ENCODE measurements at regions of chr2 and their contacts with region 1.

Region 1: DNA sequence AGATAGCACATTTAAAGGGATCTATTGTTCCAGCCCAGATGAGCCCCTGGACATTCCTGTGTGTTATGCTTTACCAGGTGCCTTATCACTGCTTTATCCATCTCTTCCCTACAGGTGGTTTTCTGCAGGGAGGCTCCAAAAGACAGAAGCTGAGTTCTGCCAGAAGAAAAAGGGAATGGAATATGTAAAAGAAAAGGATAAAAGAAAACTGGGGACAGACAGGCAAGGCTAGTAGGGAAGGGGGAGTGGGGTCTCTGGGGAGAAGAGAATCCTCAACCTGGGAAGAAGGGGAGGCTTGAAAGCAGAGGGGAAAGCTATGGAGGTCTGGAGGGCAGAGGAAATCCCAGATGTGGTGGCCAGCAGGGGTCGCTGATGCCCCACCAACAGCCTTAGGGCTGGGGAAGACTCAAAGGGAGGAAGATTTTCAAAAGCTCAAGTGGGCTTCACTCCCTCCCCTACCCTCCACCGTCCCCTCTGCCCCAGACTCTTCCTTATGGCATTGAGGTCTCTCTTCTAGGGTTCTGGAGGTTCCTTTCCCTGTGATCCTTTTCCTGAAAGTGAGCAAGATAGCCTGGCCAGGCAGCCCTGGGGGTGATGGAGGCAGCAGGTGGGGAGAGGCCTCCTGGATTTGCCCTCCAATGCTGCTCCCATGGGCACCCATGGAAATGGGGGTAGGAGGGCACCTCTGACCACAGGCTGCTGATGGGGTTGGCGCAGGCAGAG is 178.1 kb upstream of the PKDCC start:
- DNase-seq: peak; percentile 75 to 76 (median 75)
- ATAC-seq: peak; percentile 92 to 98 (median 96)
- H3K4me3 ChIP-seq: no peak overlapping the region
- H3K27ac ChIP-seq: no peak overlapping the region
- H3K4me1 ChIP-seq: no peaks in the 10 kb centered on the region
- H3K27me3 ChIP-seq: no peaks in the 10 kb centered on the region
- CTCF ChIP-seq: peak; percentile 88 to 92 (median 90)
- POLR2A ChIP-seq: no peak

Region 2: DNA sequence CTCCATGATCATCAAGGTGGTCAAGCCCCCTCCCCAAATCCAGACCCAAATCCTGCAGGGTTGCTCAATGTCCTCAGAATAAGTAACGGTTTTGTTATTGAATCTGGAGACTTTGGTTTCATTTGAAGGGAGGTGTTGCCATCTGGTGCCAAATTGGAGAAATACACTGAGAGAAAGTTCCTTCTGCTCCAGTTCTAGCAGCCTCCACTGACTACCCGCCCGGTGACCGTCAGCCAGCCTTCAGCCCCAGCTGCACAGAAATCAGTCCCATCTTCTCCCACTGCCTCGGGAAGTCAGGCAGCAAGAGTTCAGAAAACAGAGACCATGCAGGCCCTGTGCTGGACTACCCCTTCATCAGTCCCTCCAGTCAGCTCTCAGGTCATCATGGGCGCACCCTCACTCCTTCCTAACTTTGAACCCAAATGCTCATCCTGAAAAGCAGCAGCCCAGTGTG is 216.8 kb after region 1 on chr2:
- intact Hi-C with region 1: loop called (anchors 5 kb)
- DNase-seq: no peak
- ATAC-seq: peak; percentile 79 to 85 (median 82)
- H3K4me3 ChIP-seq: no peak overlapping the region
- H3K27ac ChIP-seq: no peak overlapping the region
- H3K4me1 ChIP-seq: peaks cover 0 to 3% (median 0%) of the 10 kb centered on the region in 4 donors
- H3K27me3 ChIP-seq: no peaks in the 10 kb centered on the region
- CTCF ChIP-seq: peak; percentile 71 to 91 (median 74)
- POLR2A ChIP-seq: no peak